ENCODE measurements at regions of chr16 and their contacts with region 1.

Region 1: GRCh38 chr16:30922960-30923535 is 324 bp upstream of the FBXL19 start:
- DNase-seq: peak; percentile 98
- ATAC-seq: peak; percentile 76
- H3K4me3 Mint-ChIP-seq: peak overlapping the region; percentile 88
- H3K27ac Mint-ChIP-seq: peak overlapping the region; percentile 100
- H3K4me1 Mint-ChIP-seq: peaks cover 20% of the 10 kb centered on the region
- H3K27me3 Mint-ChIP-seq: no peaks in the 10 kb centered on the region

Region 2: GRCh38 chr16:29805378-29806098 is 1117.5 kb before region 1 on chr16:
- CTCF ChIA-PET with region 1: no interaction called
- POLR2A ChIA-PET with region 1: no interaction called
- intact Hi-C with region 1: loop called in 1 of 2 experiments (anchors 5 kb)
- DNase-seq: peak; percentile 99
- ATAC-seq: peak; percentile 64
- H3K4me3 Mint-ChIP-seq: peak overlapping the region; percentile 99
- H3K27ac Mint-ChIP-seq: peak overlapping the region; percentile 100
- H3K4me1 Mint-ChIP-seq: peaks cover 37% of the 10 kb centered on the region
- H3K27me3 Mint-ChIP-seq: no peaks in the 10 kb centered on the region

Region 3: GRCh38 chr16:30698139-30698815 is 224.8 kb before region 1 on chr16:
- CTCF ChIA-PET with region 1: no interaction called
- POLR2A ChIA-PET with region 1: no interaction called
- intact Hi-C with region 1: loop called (anchors 1 kb)
- DNase-seq: peak; percentile 100
- ATAC-seq: peak; percentile 75
- H3K4me3 Mint-ChIP-seq: peak overlapping the region; percentile 96
- H3K27ac Mint-ChIP-seq: peak overlapping the region; percentile 99
- H3K4me1 Mint-ChIP-seq: peaks cover 33% of the 10 kb centered on the region
- H3K27me3 Mint-ChIP-seq: no peaks in the 10 kb centered on the region

Region 4: DNA sequence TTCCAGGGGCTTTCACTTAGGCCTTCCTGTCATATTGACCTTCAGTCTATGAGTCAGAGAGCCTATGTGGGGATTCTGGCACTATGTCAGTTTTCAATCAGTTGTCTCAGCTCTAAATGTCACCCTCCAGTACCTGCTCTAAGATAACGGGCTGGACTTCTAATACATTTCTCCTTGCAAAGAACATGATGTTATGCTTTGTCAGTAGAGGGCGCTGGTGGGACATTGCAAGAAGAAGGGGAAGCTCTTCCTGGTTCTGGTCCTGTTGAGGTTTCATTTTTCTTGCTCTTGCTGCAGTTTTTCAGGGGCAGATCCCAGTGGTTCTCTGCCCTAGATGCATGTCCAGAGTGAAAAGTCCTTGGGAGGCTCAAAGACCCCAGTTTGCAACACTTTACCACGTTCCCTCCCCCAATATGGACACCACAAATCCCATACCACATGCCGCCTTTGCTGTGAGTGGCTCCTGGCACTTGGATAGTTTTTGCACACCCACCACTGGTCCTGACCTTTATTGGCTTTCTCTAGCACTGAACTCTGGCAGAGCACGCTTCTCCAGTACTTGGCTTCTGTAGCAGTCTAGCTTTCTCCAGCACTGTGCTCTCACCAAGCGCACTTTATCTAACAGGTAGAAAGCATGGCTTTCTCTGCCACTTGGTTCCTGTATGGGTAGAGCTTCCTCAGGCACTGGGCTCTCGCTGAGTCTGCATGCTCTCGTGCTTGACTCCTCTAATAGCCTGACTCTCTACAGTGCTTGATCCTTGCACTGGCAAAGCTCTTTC is 78.2 kb before region 1 on chr16:
- CTCF ChIA-PET with region 1: interaction called, 36 read pairs
- POLR2A ChIA-PET with region 1: interaction called, 3 read pairs
- intact Hi-C with region 1: loop called (anchors 1 kb)
- DNase-seq: peak; percentile 89
- ATAC-seq: peak; percentile 88
- H3K4me3 Mint-ChIP-seq: peak overlapping the region; percentile 45
- H3K27ac Mint-ChIP-seq: peak overlapping the region; percentile 58
- H3K4me1 Mint-ChIP-seq: peaks cover 8% of the 10 kb centered on the region
- H3K27me3 Mint-ChIP-seq: no peaks in the 10 kb centered on the region

Region 5: GRCh38 chr16:30957456-30958174 is 34.6 kb after region 1 on chr16 and contains the start of gene SETD1A:
- CTCF ChIA-PET with region 1: interaction called, 4 read pairs
- POLR2A ChIA-PET with region 1: no interaction called
- intact Hi-C with region 1: loop called (anchors 1 kb)
- DNase-seq: peak; percentile 99
- ATAC-seq: peak; percentile 89
- H3K4me3 Mint-ChIP-seq: peak within 1 kb of the TSS; percentile 93
- H3K27ac Mint-ChIP-seq: peak within 1 kb of the TSS; percentile 99
- H3K4me1 Mint-ChIP-seq: peaks cover 37% of the 10 kb centered on the region
- H3K27me3 Mint-ChIP-seq: no peaks in the 10 kb centered on the region
- total RNA-seq, gene SETD1A: 18.5 to 21.7 TPM

Region 6: GRCh38 chr16:31002862-31003341 is 79.9 kb after region 1 on chr16:
- CTCF ChIA-PET with region 1: no interaction called
- POLR2A ChIA-PET with region 1: no interaction called
- intact Hi-C with region 1: no loop called
- DNase-seq: no peak
- ATAC-seq: no peak
- H3K4me3 Mint-ChIP-seq: no peak overlapping the region
- H3K27ac Mint-ChIP-seq: no peak overlapping the region
- H3K4me1 Mint-ChIP-seq: no peaks in the 10 kb centered on the region
- H3K27me3 Mint-ChIP-seq: no peaks in the 10 kb centered on the region

Region 7: DNA sequence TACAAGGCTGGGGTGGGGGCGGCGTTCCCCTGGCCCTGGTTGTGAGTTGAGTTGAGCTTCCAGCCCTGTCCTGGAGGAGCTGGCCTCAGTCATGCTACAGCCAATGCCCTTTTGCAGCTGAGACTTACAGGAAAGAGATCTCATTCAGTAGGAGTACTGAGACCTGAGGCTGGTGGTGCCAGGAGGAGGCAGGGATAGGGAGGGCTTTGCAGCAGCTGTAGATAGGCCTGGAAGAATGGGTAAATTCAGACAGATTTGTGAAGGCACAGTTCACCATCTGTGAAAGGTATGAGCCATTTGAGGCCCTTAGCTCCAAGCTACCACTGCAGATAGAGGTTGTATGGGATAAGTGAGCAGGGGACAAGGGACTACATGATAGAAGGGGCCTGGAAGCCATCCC is 115.9 kb after region 1 on chr16:
- CTCF ChIA-PET with region 1: no interaction called
- POLR2A ChIA-PET with region 1: no interaction called
- intact Hi-C with region 1: no loop called
- DNase-seq: no peak
- ATAC-seq: no peak
- H3K4me3 Mint-ChIP-seq: no peak overlapping the region
- H3K27ac Mint-ChIP-seq: no peak overlapping the region
- H3K4me1 Mint-ChIP-seq: peaks cover 7% of the 10 kb centered on the region
- H3K27me3 Mint-ChIP-seq: no peaks in the 10 kb centered on the region

Region 8: DNA sequence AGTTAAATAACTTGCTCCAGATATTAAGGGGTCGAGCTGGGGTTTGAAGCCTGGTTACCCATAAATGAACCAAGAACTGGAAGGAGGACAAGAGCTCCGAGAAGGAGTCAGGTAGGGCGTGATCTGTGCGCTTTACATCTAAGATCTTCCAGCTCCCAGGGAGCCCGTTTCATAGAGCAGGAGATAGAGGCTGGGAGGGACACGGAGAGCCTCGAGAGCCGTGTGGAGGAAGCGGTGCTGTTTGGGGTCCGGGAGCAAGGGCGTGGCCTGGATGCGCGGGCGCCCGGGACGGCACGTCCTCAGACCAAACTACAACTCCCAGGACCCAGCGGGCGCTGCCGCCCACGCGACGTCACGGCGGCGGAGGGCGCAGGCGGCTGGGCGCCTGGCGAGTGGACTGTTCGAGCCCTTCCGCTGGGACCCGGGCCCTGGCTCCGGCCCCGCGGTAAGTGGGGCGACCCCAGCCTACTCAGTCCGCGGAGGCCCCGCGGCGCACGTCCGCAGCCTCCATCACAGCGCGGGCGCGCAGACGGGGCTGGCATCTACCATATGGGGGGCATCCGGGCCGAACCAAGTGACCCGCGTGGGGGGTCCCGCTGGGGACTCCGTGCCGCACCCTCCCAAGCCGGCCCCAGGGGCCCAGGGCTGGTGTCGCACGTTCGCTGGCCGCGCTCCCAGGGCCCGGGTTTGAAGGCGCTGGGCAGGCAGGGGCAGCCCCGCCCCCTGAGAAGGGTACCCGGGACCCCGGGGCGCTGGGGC is 185.2 kb after region 1 on chr16 and contains the start of gene BCKDK:
- CTCF ChIA-PET with region 1: no interaction called
- POLR2A ChIA-PET with region 1: no interaction called
- intact Hi-C with region 1: loop called in 1 of 2 experiments (anchors 2 kb)
- DNase-seq: peak; percentile 90
- ATAC-seq: peak; percentile 79
- H3K4me3 Mint-ChIP-seq: peak within 1 kb of the TSS; percentile 86
- H3K27ac Mint-ChIP-seq: peak within 1 kb of the TSS; percentile 96
- H3K4me1 Mint-ChIP-seq: peaks cover 22% of the 10 kb centered on the region
- H3K27me3 Mint-ChIP-seq: no peaks in the 10 kb centered on the region
- total RNA-seq, gene BCKDK: 50.0 to 53.3 TPM

Region 9: DNA sequence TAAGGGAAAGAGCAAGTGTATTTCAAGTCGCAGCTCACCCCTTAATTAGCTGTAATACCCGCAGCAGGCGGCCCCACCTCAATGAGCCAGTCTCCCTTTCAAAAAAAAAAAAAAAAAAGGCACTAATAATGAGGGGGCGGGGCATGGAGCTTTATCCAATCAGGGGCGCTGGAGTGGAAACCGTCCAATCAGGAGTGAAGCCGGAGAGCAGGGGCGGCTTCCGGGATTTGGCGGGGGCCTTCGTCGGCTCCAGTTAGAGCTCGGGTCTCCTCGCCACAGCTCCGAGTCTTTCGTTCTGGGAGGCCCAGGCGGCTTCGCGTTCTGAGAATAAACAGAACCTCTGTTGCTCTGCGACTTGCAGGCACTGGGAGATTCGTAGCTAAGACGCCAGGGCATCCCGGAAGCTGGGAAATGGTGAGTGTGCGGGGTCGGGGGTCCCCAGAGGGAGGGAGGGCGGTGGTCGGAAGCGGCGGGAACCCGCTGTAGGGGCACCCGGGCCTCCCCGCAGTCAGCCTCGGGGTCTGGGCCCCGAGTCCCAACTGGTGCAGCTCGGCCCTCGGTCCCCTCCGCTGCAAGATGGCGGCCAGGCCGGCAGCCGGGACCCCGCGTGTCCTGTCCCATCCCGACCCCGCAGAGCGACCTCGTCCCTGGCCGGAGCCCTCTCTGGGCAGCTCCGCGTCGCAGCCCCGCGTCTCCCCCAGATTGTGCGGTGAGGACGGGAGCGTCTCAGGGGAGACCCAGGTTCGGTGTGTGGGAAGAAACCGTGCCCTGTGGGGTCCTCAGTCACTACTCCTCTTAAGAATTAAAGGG is 950.7 kb after region 1 on chr16 and contains the start of gene ZNF267:
- CTCF ChIA-PET with region 1: no interaction called
- POLR2A ChIA-PET with region 1: no interaction called
- intact Hi-C with region 1: loop called in 1 of 2 experiments (anchors 10 kb)
- DNase-seq: peak; percentile 96
- ATAC-seq: peak; percentile 60
- H3K4me3 Mint-ChIP-seq: peak within 1 kb of the TSS; percentile 94
- H3K27ac Mint-ChIP-seq: peak within 1 kb of the TSS; percentile 97
- H3K4me1 Mint-ChIP-seq: peaks cover 73% of the 10 kb centered on the region
- H3K27me3 Mint-ChIP-seq: no peaks in the 10 kb centered on the region
- total RNA-seq, gene ZNF267: 61.9 to 64.9 TPM